T-cell (primary cell): ENCODE measurements at regions of chr5 and their contacts with region 1.

Region 1: DNA sequence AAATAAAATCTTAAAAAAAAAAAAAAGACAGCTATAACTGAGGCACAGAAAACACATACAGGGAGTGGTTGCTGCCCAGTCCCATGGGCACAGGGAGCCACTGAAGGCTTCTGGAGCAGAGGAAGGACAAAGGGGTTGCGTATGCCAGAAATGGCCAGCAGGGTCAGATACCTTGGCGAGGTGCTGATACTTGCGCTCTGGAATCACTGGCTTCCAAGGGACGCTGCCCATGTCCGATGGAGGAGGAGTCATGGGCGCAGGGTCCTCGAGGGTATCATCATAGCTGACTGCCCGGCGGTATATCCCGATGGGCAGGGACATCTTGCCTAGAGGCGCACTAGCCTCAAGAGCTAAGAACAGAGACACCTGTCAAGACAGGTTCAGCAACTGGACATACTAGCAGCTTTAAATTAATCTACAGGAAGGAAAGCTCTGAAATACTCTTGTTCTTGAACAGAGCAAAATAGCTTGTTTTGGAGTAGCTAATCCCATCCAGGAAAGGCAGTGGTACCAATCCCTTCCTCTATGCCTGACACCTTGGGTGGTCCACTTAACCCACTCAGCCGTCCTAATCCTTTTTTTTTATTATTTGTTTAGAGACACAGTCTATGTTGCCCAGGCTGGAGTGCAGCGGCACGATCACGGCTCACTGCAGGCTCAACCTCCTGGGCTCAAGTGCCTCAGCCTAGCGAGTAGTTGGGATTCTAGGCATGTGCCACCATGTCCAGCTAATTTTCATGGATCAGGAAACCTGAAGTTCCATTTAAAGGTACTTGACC is 6.0 kb downstream of the KIAA1191 start:
- DNase-seq: no peak
- ATAC-seq: no peak
- H3K4me3 ChIP-seq: no peak overlapping the region
- H3K4me3 Mint-ChIP-seq: no peak overlapping the region
- H3K27ac ChIP-seq: no peak overlapping the region
- H3K27ac Mint-ChIP-seq: no peak overlapping the region
- H3K4me1 ChIP-seq: peaks cover 3 to 19% of the 10 kb centered on the region in 2 experiments
- H3K4me1 Mint-ChIP-seq: peaks cover 42 to 49% (median 45%) of the 10 kb centered on the region in 3 donors
- H3K27me3 ChIP-seq: no peaks in the 10 kb centered on the region
- H3K27me3 Mint-ChIP-seq: no peaks in the 10 kb centered on the region

Region 2: DNA sequence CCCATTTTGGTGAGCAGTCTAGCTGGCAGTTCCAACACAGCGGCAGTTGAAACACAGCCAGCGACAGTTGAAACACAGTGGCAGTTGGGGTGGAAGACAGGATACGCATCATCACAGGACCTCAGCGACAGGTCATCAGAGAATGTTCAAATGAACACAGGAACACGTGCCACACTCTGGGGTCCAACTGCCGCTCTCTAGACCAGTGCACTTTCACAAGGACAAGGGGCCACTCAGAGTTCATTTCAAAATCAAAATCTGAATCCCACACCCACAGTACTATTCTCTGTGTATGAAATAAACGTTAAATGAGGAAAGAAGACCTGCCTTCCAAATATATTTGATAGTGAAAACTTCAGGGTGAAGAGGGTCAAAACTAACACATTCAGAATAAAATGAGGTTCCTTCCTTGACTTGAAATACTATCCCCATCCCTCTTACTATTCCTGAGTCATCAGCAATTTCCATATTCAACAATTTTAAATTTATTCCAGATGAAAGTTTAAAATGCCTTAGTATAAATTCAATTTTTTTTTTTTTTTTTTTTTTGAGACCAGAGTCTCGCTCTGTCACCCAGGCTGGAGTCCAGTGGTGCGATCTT is 170.4 kb before region 1 on chr5:
- CTCF ChIA-PET with region 1: interaction called in 1 of 2 experiments, 10 read pairs
- POLR2A ChIA-PET with region 1: no interaction called
- DNase-seq: no peak
- ATAC-seq: no peak
- H3K4me3 ChIP-seq: no peak overlapping the region
- H3K4me3 Mint-ChIP-seq: no peak overlapping the region
- H3K27ac ChIP-seq: no peak overlapping the region
- H3K27ac Mint-ChIP-seq: no peak overlapping the region
- H3K4me1 ChIP-seq: no peaks in the 10 kb centered on the region
- H3K4me1 Mint-ChIP-seq: no peaks in the 10 kb centered on the region
- H3K27me3 ChIP-seq: peaks cover 5 to 10% of the 10 kb centered on the region in 2 experiments
- H3K27me3 Mint-ChIP-seq: peaks cover 13 to 16% of the 10 kb centered on the region in 2 donors